AG04449 (cell line): ENCODE measurements at regions of chr7 and their contacts with region 1.

Region 1: DNA sequence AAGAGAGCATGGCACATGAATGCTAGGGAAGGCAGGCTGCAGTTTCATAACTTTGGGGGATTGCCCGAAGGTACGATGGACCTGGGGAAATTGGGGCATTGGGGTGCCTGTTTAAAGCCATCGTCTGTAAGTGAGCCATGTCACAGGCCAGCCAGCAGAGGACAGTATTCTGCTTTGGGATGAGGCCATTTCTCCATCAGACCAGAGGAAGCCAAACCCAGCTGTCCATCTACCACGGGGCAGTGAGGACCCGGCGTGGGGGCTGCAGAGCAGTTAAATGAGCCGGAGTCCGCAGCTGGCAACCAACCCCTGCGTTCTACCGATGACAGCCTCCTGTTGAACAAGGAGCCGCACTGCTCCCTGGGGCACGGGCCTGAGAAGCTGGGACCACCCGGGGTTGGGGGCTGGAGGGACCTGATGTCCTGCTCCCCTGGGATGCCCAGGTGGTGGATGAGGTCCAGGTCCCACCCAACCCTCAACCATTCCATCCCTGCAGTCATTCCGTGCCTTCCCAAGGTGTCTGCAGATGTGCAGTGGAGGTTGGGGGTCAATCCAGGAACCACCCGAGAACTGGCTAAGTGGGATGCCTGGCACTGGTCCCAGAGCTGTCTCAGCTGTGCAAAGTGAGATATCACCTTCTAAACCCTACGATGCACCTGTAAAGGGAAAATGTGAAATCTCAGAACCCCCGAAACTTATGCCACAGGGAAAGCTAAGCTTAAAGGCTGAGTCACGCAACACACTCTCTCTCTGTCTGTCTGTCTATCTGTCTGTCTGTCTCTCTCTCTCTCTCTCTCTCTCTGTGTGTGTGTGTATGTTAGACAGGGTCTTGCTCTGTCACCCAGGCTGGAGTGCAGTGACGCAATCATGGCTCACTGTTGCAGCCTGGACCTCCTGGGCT is 12.1 kb upstream of the RHBDD2 start:
- DNase-seq: no peak
- H3K4me3 ChIP-seq: no peak overlapping the region
- CTCF ChIP-seq: peak; percentile 94

Region 2: DNA sequence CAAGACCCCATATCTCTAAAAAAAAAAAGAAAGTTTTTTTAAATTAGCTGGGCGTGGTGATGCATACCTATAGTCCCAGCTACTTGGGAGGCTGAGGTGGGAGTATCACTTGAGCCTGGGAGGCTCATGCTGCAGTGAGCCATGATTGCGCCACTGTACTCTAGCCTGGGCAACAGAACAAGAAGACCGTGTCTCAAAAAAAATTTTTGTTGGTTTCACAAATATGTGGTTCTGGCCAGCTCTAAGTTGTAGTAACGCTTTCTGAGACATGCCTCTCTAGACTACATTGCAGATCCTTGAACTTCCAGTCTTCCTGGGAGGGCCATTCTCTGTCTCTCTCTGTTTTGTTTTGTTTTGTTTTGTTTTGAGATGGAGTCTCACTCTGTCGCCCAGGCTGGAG is 12.5 kb before region 1 on chr7:
- CTCF ChIA-PET with region 1: interaction called, 14 read pairs
- POLR2A ChIA-PET with region 1: no interaction called
- DNase-seq: no peak
- H3K4me3 ChIP-seq: no peak overlapping the region
- CTCF ChIP-seq: no peak